ENCODE measurements at regions of chr13 and their contacts with region 1.

Region 1: DNA sequence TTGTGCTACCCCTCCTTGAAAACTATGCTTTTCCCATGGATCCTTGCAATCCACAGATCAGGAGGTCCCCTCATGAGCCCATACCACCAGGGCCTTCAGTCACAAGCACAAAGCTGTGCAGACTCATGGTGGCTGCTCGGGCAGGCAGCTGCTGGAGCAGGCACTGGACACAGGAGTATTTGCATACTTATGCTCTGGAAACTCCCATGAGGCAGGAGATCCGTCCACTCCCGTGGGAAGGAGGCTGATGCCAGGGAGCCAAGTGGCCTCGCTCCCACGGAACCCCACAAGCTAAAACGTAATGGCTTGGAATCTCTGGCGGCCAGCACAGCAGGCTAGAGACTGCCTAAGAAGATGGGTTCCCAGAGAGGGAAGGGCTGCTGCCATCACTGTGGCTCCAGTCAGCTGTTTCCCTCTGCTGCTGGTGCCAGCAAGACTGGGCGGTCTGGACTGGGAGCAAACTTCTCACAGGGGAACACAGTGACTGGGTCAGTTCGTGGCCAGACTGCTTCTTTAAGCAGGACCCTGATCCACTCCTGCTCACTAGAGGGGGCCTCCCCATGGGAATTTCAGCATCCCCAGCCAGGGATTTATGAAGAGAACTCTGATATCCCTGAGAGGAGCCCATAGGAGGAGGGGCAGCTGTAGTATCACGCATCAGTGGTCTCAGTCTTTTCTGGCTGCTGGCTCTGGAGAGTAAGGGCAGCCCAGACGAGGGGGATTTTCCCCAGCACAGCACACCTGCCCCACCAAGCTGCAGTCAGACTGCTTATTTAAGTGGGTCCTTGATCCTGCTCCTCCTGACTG is 370.3 kb upstream of the ATXN8OS start:
- DNase-seq: no peak
- H3K4me3 Mint-ChIP-seq: no peak overlapping the region
- H3K27ac Mint-ChIP-seq: no peak overlapping the region
- H3K4me1 Mint-ChIP-seq: no peaks in the 10 kb centered on the region
- H3K27me3 Mint-ChIP-seq: no peaks in the 10 kb centered on the region

Region 2: DNA sequence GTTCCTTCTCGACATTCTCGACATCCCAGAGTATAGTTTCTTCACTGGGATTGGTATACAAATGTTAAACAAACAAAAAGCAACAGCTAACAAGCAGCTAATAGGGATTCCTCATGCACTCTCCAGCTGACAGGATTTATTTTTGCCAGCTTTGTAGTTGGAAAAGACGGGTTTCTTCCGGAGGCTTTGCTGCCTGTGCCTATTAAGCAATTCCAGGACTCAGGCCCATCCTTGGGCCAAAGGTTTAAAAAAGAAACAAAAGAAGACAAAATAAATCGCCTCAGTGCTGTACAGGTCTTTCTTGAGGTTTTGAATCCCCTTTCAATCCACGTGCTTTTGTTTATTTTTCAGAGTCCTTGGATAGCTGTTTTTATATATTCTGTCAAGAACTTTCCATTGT is 1092.7 kb before region 1 on chr13:
- CTCF ChIA-PET with region 1: no interaction called
- POLR2A ChIA-PET with region 1: interaction called, 13 read pairs
- DNase-seq: no peak
- H3K4me3 Mint-ChIP-seq: no peak overlapping the region
- H3K27ac Mint-ChIP-seq: no peak overlapping the region
- H3K4me1 Mint-ChIP-seq: no peaks in the 10 kb centered on the region
- H3K27me3 Mint-ChIP-seq: no peaks in the 10 kb centered on the region

Region 3: DNA sequence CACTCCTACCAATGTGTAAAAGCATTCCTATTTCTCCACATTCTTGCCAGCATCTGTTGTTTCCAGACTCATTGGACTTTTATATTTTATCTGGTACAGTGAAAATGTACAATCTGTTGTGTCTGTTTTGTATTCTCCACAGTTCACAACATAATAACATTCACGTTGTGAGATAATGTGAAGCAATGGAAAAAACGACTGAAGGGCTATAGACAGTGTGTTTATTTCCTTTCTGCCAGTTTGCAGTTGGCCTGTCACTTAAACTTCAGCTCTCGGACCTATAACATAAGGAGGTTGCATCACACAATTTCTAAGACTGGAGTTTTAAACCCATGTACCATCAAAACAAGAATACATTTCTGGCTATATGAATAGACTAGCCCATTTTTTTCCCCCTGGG is 595.2 kb before region 1 on chr13:
- CTCF ChIA-PET with region 1: no interaction called
- POLR2A ChIA-PET with region 1: no interaction called
- DNase-seq: no peak
- H3K4me3 Mint-ChIP-seq: no peak overlapping the region
- H3K27ac Mint-ChIP-seq: no peak overlapping the region
- H3K4me1 Mint-ChIP-seq: no peaks in the 10 kb centered on the region
- H3K27me3 Mint-ChIP-seq: no peaks in the 10 kb centered on the region

Region 4: GRCh38 chr13:69769608-69770007 is 32.3 kb after region 1 on chr13:
- CTCF ChIA-PET with region 1: no interaction called
- POLR2A ChIA-PET with region 1: no interaction called
- DNase-seq: no peak
- H3K4me3 Mint-ChIP-seq: no peak overlapping the region
- H3K27ac Mint-ChIP-seq: no peak overlapping the region
- H3K4me1 Mint-ChIP-seq: no peaks in the 10 kb centered on the region
- H3K27me3 Mint-ChIP-seq: no peaks in the 10 kb centered on the region

Measured in activated CD4-positive, alpha-beta T cell treated with anti-CD3 and anti-CD28 coated beads, Interleukin-2, amount 10 ng/mL, durations not matched to agents 7 days and 5 days (primary cell).